AG04450 (cell line): ENCODE measurements at regions of chr9 and their contacts with region 1.

Region 1: DNA sequence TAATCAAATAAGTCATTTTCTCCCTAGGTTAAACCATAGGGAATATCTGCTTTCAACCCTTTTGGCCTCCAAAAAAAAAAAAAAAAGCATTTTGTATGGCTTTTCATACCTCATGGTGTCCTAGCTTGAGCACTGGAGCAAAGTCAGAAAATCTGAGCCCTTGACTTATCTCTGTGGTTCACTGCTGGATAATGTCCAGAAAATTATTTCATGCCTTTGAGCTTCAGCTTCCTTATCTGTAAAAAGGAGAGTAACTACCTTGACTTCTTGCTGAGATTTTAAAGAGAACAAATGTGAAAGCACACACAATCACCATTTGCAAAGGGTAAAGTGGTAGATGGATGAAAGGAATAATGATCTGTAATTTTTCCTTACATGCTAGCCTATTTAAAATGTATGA is 165.9 kb downstream of the ALDH1A1 start:
- DNase-seq: no peak
- H3K4me3 ChIP-seq: no peak overlapping the region
- H3K27ac ChIP-seq: no peak overlapping the region
- H3K27me3 ChIP-seq: no peaks in the 10 kb centered on the region
- CTCF ChIP-seq: no peak

Region 2: GRCh38 chr9:72297516-72297915 is 489.4 kb before region 1 on chr9:
- CTCF ChIA-PET with region 1: interaction called, 13 read pairs
- POLR2A ChIA-PET with region 1: no interaction called
- DNase-seq: no peak
- H3K4me3 ChIP-seq: no peak overlapping the region
- H3K27ac ChIP-seq: no peak overlapping the region
- H3K27me3 ChIP-seq: peaks cover 6% of the 10 kb centered on the region
- CTCF ChIP-seq: no peak